Right cardiac atrium (tissue), 5 donors: ENCODE measurements at regions of chr10 and their contacts with region 1.

Region 1: GRCh38 chr10:8705415-8705814 is 650.9 kb downstream of the GATA3 start:
- DNase-seq: no peak
- ATAC-seq: no peak
- H3K4me3 ChIP-seq: no peak overlapping the region
- H3K27ac ChIP-seq: no peak overlapping the region
- H3K4me1 ChIP-seq: no peaks in the 10 kb centered on the region
- H3K27me3 ChIP-seq: no peaks in the 10 kb centered on the region

Region 2: GRCh38 chr10:8102708-8103401 is 602.6 kb before region 1 on chr10:
- intact Hi-C with region 1: no loop called
- DNase-seq: no peak
- ATAC-seq: no peak
- H3K4me3 ChIP-seq: no peak overlapping the region
- H3K27ac ChIP-seq: no peak overlapping the region
- H3K4me1 ChIP-seq: no peaks in the 10 kb centered on the region
- H3K27me3 ChIP-seq: no peaks in the 10 kb centered on the region

Region 3: GRCh38 chr10:8350351-8350967 is 355.0 kb before region 1 on chr10:
- intact Hi-C with region 1: loop called in 1 of 4 experiments (anchors 10 kb)
- DNase-seq: no peak
- ATAC-seq: no peak
- H3K4me3 ChIP-seq: no peak overlapping the region
- H3K27ac ChIP-seq: no peak overlapping the region
- H3K4me1 ChIP-seq: no peaks in the 10 kb centered on the region
- H3K27me3 ChIP-seq: no peaks in the 10 kb centered on the region

Region 4: DNA sequence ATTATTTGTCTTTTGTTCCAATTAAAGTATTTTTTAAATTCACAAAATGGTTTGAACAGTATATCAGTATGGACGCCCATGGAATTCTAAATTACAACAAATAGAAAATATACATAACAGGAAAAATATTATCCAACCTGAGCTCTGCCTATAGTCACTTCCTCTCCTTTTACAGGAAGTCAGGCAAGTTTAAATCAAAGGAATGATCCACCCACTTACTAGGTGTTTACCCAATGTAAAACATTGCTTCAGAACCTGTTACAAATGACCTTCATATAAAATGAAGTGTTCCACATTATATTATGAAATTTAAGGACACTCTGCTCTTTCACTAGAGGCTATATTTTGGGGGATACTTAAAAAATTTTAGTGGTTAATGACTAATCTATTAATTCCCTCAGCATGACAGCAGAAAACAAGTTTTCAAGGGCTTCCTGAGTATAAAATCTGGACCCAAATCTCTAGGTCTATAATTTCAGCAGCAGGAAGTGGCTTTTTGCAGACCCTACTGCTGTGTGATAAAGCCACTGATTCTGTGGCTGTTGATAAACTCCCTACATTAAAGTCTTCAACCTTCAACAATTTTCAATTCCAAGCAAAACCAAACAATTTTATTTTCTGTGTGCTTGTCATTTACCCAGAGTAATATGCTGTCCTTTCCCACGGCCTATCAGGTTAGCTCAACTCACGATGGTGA is 71.7 kb after region 1 on chr10:
- intact Hi-C with region 1: no loop called
- DNase-seq: no peak
- ATAC-seq: no peak
- H3K4me3 ChIP-seq: no peak overlapping the region
- H3K27ac ChIP-seq: no peak overlapping the region
- H3K4me1 ChIP-seq: no peaks in the 10 kb centered on the region
- H3K27me3 ChIP-seq: no peaks in the 10 kb centered on the region

Region 5: DNA sequence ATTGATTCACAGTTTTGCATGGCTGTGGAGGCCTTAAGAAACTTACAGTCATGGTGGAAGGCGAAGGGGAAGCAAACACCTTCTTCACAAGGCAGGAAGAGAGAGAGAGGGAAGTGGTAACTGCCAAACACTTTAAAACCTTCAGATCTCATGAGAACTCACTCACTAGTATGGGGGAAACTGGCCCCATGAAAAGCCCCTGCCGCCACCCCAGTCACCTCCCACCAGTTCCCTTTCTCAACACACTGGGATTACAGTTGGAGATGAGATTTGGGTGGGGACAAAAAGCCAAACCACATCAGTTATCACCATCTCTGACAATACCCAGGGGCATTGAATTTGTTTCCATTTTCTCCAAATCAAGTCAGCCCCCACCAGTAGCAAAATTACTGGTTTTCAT is 89.4 kb after region 1 on chr10:
- intact Hi-C with region 1: no loop called
- DNase-seq: no peak
- ATAC-seq: no peak
- H3K4me3 ChIP-seq: no peak overlapping the region
- H3K27ac ChIP-seq: no peak overlapping the region
- H3K4me1 ChIP-seq: no peaks in the 10 kb centered on the region
- H3K27me3 ChIP-seq: no peaks in the 10 kb centered on the region

Region 6: GRCh38 chr10:8873310-8873709 is 167.9 kb after region 1 on chr10:
- intact Hi-C with region 1: no loop called
- DNase-seq: no peak
- ATAC-seq: no peak
- H3K4me3 ChIP-seq: no peak overlapping the region
- H3K27ac ChIP-seq: no peak overlapping the region
- H3K4me1 ChIP-seq: no peaks in the 10 kb centered on the region
- H3K27me3 ChIP-seq: no peaks in the 10 kb centered on the region